ENCODE measurements at regions of chr5 and their contacts with region 1.

Region 1: GRCh38 chr5:124725040-124725434 is 21.4 kb downstream of the ZNF608 start:
- DNase-seq: no peak
- H3K4me3 ChIP-seq: no peak overlapping the region
- H3K27ac ChIP-seq: peak overlapping the region in 1 of 4 donors; percentile 20
- H3K4me1 ChIP-seq: peaks cover 0 to 40% (median 27%) of the 10 kb centered on the region in 4 donors
- H3K27me3 ChIP-seq: no peaks in the 10 kb centered on the region
- CTCF ChIP-seq: no peak
- EP300 ChIP-seq: no peak
- POLR2A ChIP-seq: no peak

Region 2: GRCh38 chr5:124706729-124707361 is 18.2 kb before region 1 on chr5:
- intact Hi-C with region 1: loop called (anchors 2 kb)
- DNase-seq: no peak
- H3K4me3 ChIP-seq: peak overlapping the region in 3 of 4 donors; percentile 9 to 17 (median 15)
- H3K27ac ChIP-seq: peak overlapping the region; percentile 32 to 70 (median 44)
- H3K4me1 ChIP-seq: peaks cover 0 to 80% (median 74%) of the 10 kb centered on the region in 4 donors
- H3K27me3 ChIP-seq: no peaks in the 10 kb centered on the region
- CTCF ChIP-seq: no peak
- EP300 ChIP-seq: no peak
- POLR2A ChIP-seq: no peak

Region 3: DNA sequence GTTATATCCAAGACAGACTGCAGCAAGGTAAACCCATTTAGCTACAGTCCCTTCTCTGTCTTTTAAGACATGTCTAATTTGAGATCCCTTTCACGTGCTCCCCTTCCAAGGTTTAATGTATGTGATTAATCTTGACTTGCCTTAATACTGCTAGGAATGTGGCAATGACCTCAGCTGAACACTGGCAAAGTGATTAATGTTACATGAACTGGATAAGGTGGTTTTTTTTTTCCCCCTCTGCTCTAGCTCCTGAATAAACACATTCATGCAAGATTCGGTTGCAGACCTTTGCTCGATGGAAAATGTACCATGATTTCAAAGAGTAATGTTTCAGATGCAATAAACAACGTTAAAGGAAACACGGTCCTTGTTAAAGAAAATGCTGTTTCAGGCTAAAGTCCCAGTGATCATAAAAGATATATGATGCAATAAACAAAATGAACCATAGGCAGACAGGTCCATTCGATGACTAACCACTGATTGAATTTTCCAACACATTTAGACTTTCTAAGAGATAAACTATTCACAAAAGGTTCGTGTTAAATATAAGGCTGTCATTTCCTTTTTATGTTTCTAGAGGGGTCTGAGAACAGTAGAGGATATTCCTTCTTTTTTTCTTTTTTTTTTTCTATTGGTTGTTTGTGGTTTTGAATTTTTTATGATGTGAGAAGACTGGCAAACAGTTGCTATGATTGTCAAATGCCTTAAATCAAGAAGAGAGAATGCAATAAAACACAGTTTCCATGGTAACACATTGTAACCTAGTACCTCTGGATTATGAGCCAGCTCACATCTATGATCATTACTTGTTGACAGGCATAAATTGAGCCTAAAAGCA is 66.1 kb after region 1 on chr5:
- intact Hi-C with region 1: no loop called
- DNase-seq: no peak
- H3K4me3 ChIP-seq: no peak overlapping the region
- H3K27ac ChIP-seq: no peak overlapping the region
- H3K4me1 ChIP-seq: peaks cover 0 to 12% (median 5%) of the 10 kb centered on the region in 4 donors
- H3K27me3 ChIP-seq: no peaks in the 10 kb centered on the region
- CTCF ChIP-seq: no peak
- EP300 ChIP-seq: no peak
- POLR2A ChIP-seq: no peak

Region 4: GRCh38 chr5:124952079-124952478 is 227.0 kb after region 1 on chr5:
- intact Hi-C with region 1: no loop called
- DNase-seq: no peak
- H3K4me3 ChIP-seq: no peak overlapping the region
- H3K27ac ChIP-seq: no peak overlapping the region
- H3K4me1 ChIP-seq: no peaks in the 10 kb centered on the region
- H3K27me3 ChIP-seq: no peaks in the 10 kb centered on the region
- CTCF ChIP-seq: no peak
- EP300 ChIP-seq: no peak
- POLR2A ChIP-seq: no peak

Measured in sigmoid colon (tissue), 7 donors.